Colonic mucosa (tissue), 4 donors: ENCODE measurements at regions of chr2 and their contacts with region 1.

Region 1: GRCh38 chr2:246489-247144 is 17.2 kb downstream of the SH3YL1 start:
- DNase-seq: peak; percentile 31
- H3K4me3 ChIP-seq: no peak overlapping the region
- H3K27ac ChIP-seq: no peak overlapping the region
- H3K4me1 ChIP-seq: no peaks in the 10 kb centered on the region
- H3K27me3 ChIP-seq: no peaks in the 10 kb centered on the region
- CTCF ChIP-seq: peak; percentile 41

Region 2: DNA sequence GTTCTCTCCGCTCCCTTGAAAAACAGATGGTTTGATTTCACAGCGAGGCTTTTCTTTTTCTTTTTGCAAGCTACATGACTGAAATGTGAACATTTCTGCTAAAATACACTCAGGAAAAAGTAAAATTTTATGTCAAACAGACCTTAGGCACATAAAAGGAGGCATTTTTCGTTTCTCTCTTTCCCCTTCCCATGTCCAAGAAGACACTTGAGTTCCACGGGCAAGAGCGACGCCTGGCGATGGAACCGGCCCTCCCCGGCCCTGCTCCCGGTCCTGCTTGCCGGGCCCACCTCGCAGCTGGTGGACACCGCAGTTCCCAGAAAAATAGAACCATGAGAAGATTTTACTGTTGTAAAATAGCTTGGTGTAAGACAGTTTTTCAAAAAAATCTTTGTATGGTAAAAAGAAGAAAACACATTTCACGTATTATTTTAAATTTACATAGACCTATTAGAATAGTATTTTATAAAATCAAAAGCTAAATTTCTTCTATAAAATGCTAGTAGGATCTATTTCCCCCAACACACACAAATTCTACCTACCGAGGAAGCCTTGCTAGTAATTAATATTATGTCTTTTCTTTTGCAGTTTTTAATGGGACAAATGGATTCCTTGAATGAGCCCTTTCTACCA is 43.6 kb after region 1 on chr2:
- intact Hi-C with region 1: loop called (anchors 5 kb)
- DNase-seq: peak; percentile 75
- H3K4me3 ChIP-seq: peak overlapping the region; percentile 53
- H3K27ac ChIP-seq: peak overlapping the region; percentile 21
- H3K4me1 ChIP-seq: peaks cover 11% of the 10 kb centered on the region
- H3K27me3 ChIP-seq: peaks cover 34% of the 10 kb centered on the region
- CTCF ChIP-seq: peak; percentile 68

Region 3: DNA sequence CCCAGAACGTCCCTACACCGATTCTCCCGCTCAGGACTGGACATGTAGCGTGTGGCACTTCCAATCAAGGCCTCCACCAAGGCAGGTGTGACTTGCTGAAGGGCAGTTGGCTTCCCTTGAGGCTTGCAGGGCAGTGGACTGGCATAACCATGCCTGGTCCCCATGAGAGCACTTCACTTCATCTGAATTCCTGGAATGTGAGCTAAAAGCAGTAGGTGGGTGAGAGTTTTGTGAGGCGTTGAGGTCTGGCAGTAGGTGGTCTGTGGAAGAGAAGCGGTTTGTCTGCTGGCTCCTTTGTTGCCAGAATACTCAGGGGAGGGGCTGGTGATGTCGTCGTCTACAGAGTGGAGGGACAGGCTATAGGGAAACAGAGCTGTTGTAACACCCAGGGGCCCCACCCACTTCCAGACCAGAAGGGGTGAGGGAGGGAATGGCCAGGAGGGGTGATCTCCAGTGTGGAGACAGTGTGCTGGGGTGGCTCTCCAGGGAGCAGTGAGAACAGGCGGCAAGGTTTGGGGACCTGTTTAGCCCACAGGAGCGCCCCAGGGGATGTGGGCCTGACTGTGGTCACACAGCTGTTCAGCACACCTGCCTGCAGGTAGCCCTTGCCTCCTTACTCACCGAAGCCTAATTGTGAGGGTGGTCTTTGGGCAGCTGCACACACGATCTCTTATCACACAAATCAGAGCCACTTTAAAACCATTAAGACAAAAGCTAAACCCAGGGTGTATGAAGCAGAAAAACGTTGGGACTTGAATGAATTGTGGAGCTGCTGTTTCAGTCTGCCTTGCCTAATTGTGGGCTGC is 62.7 kb after region 1 on chr2:
- intact Hi-C with region 1: no loop called
- DNase-seq: no peak
- H3K4me3 ChIP-seq: no peak overlapping the region
- H3K27ac ChIP-seq: no peak overlapping the region
- H3K4me1 ChIP-seq: no peaks in the 10 kb centered on the region
- H3K27me3 ChIP-seq: no peaks in the 10 kb centered on the region
- CTCF ChIP-seq: no peak

Region 4: GRCh38 chr2:479490-480176 is 233.0 kb after region 1 on chr2:
- intact Hi-C with region 1: no loop called
- DNase-seq: no peak
- H3K4me3 ChIP-seq: peak overlapping the region; percentile 14
- H3K27ac ChIP-seq: no peak overlapping the region
- H3K4me1 ChIP-seq: no peaks in the 10 kb centered on the region
- H3K27me3 ChIP-seq: no peaks in the 10 kb centered on the region
- CTCF ChIP-seq: no peak

Region 5: DNA sequence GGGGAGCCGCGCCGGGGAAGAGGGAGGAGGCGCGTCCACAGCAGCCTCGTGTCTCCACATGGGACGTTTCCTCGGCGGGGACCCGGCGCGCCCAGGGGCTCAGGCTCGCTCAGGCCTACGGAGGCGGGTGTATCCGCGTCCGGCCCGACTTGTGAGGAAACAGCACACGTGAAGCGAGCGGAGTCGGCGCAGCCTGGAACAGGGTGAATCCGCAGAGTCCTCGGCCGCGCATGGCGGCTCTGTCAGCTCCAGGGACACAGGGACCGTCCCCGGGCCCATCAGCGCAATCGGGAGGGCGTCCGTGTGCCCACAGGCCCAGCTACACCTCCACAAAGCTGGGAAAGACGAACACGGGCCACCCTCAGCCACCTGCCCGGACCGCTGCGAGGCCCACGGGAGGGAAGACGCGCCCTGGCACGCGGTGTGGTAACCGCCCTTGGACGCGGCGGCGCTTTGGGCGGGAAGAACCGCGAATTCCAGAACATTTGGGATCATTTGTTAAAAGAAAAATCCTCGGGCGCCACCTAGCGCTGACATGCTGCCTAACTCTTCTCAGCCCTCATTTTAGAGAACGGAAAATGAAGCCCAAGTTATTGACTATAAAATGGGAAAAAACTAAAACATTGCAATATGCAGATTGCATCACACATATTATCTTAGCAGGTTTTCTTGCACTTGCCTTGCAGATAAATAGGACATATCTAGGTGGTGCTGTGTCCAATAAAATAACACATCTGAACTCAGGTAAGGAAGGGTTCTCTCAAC is 390.2 kb after region 1 on chr2:
- intact Hi-C with region 1: loop called (anchors 5 kb)
- DNase-seq: peak; percentile 71
- H3K4me3 ChIP-seq: peak overlapping the region; percentile 28
- H3K27ac ChIP-seq: no peak overlapping the region
- H3K4me1 ChIP-seq: no peaks in the 10 kb centered on the region
- H3K27me3 ChIP-seq: no peaks in the 10 kb centered on the region
- CTCF ChIP-seq: peak; percentile 71

Region 6: DNA sequence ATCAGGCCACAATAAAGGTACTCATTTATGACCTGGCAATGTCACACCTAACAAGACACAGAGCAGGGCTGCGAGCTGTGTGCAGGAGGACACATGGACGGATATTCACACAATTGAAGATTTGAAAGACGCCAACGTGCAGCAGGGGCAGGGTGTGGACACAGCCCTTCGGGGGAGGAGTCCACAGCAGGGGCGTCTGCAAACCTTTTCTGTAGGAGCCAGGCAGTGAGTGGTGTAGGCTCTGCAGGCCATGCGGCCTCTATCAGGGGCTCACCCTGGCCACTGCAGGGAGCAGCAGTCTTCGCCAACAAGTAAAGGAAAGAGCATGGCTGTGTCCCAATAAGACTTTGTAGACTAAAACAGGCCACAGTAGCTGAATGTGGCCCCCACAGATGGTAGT is 578.3 kb after region 1 on chr2:
- intact Hi-C with region 1: no loop called
- DNase-seq: no peak
- H3K4me3 ChIP-seq: no peak overlapping the region
- H3K27ac ChIP-seq: no peak overlapping the region
- H3K4me1 ChIP-seq: no peaks in the 10 kb centered on the region
- H3K27me3 ChIP-seq: no peaks in the 10 kb centered on the region
- CTCF ChIP-seq: no peak